ENCODE measurements at regions of chr17 and their contacts with region 1.

Region 1: DNA sequence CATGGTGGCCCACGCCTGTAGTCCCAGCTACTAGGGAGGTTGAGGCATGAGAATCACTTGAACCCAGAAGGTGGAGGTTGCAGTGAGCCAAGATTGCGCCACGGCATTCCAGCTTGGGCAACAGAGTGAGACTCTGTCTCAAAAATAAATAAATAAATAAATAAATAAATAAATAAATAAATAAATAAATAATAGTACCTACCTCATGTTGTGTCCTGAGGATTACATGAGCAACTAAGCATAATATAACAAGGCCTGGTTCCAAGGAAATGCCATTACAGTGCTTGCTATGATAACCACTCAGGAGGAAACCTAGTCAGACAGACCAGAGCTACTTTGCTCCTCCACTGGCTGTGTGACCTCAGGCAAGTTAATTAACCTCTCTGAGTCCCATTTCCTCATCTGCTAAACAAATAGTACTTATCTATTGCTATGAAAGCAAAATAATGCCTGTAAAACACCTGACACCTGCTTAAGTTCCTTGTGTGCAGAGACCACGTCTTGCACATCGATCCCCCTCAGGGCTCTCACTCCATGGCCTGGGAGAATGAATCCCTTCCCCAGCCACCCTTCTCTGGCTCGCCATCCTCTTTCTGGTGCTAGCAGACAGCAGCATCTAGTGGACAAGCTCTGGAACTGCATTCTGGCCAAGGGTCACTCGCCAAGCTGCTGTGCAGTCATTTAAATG is 7.5 kb downstream of the EPOP start:
- DNase-seq: peak; percentile 35 to 95 (median 73)

Region 2: GRCh38 chr17:38485146-38485468 is 182.1 kb before region 1 on chr17:
- intact Hi-C with region 1: loop called (anchors 5 kb)
- DNase-seq: no peak

Region 3: GRCh38 chr17:38509008-38509771 is 158.1 kb before region 1 on chr17:
- intact Hi-C with region 1: loop called (anchors 5 kb)
- DNase-seq: peak; percentile 60 to 97 (median 78)

Region 4: GRCh38 chr17:38544839-38545209 is 122.4 kb before region 1 on chr17:
- intact Hi-C with region 1: no loop called
- DNase-seq: peak in 1 of 10 donors; percentile 84

Region 5: DNA sequence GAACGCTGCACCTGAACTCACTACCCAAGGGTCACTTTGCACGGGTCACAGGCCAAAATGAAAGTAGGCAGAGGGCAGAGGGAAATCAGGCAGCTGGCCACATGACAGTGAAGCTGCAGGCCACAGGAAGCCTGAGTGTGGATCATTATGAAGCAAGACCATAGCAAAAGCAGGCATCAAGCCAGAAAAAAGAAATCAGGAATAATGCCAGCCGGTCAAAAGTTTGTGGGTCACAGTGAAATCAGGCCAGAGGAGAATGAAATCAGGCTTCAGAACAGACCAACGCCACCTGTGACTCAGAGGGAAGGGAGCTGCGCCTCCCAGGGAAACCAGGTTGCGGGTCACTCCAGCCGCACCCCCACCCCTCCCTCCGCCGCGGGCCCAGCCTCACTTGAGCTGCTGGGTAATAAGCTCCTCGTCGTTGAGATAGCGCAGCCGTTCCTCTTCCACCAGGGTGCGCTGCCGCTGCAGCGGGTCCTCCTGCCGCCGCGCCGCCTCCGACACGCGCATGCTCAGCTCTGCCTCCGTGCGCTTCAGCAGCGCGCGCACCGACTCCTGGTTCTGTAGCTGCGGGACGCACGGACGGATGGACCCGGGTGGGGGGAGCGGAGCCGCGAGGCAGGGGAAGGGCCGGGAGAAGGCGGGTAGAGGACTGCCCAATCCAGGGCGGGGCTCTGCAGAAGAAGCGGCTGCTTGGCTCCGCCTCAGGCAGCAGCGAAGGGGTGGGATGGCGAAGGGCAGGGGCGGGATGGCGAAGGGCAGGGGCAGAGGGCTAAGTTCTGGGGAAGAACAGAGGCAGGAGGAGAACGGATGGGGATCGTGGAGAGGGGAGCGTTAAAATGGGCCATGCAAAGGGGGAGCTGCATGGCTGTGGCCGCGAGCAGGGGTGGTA is 109.2 kb before region 1 on chr17:
- intact Hi-C with region 1: loop called (anchors 2 kb)
- DNase-seq: peak; percentile 85 to 99 (median 90)

Region 6: DNA sequence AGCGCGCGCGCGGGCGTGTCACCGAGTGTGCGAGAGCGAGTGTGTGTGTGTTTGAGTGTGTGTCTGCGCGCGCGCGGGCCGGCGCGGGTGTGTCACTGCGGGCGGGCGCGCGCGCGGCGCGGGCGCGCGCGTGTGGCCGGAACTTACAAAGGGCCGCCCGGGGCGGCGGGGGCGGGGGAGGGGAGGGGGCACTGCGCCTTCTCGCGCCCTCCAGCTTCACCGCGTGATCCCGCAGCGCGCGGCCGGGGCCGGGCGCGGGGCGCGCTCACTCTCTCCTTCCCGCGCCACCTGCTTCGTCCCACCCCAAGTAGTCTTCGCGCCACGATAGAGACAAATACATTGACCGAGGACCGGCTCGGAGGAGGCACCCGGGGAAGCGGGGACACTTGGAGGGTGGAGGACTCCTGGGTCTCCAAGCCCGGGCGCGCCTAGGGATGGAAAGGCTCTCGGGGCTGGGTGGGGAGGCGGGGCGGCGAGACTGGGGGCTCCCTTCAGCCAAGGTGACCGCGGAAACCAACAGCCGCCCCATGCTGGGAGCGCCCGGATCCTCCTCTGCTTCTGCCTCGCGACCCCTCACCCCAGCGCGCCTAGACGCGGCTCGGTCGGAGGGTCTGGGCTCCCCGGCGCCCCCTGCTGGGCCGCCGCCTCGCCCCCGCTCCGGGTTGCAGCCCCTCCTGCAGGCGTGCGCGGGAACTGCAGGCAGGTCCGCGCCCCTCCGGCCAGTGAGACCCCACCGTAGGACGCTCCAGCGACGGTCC is 61.2 kb before region 1 on chr17 and contains the start of gene SRCIN1:
- intact Hi-C with region 1: loop called (anchors 2 kb)
- DNase-seq: peak; percentile 51 to 96 (median 70)